Calu3 (cell line): ENCODE measurements at regions of chr17 and their contacts with region 1.

Region 1: DNA sequence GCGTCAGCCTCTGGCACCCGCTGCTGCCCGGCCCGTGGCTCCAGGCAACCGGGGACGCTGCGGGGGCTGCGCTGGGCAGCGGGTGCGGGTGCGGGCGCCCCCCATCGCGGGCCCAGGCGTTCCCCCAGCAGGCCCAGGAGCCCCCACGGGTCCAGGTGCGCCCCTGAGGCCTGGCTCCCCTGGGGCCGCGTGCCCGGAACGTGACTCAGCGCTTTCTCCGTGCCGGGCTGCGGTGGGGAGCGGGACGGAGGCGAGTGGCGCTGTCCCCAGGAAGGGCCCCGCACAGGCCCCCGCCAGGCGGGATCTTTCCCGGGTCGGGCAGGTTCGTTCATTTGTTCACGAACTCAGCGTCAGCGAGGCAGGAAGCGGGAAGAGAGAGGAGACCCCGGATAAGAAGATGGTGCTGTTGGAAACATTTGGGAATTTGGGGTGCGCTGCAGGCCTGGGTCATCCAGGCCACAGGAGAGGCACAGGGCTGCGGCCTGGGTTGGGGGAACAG is 18.4 kb upstream of the EXOC7 start:
- DNase-seq: no peak
- H3K4me3 Mint-ChIP-seq: no peak overlapping the region
- H3K27ac Mint-ChIP-seq: no peak overlapping the region
- H3K4me1 Mint-ChIP-seq: no peaks in the 10 kb centered on the region
- H3K27me3 Mint-ChIP-seq: no peaks in the 10 kb centered on the region
- CTCF ChIP-seq: no peak

Region 2: DNA sequence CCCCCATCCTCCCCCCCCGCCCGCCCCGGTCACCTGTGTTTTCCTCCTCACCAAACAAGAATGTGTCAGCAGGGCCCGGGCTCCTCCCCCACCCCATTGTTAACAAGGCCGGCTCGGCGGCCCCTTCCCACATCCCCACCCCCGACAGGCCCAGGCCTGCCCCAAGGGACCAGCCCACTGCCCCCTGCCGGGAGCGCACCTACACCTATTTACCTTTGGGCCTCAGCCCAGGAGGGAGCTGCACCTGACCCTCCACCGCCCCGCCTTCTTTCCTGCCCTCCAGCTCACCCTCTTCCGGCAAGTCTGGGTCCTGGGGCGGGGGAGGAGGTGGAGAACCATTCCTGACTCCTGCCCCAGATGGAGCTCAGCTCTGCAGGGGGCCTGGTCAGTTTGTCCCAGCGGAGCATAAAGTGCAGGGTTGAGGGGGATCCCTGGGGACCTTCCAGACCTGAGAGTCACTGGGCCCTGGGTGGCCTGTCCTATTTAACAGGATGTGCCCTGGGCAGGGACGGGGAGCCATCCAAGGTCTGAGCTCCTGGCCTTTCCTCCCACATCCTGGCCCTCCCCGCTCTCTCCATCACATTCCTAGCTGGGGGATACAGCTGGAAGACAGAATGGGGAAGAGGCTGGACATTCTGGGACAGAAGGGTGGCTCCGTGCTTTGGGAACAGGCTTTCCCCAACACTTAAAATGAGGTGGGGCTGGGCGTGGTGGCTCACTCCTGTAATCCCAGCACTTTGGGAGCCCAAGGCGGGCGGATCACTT is 10.8 kb after region 1 on chr17:
- CTCF ChIA-PET with region 1: interaction called, 21 read pairs
- intact Hi-C with region 1: no loop called
- DNase-seq: peak; percentile 82
- H3K4me3 Mint-ChIP-seq: peak overlapping the region; percentile 55
- H3K27ac Mint-ChIP-seq: no peak overlapping the region
- H3K4me1 Mint-ChIP-seq: peaks cover 18% of the 10 kb centered on the region
- H3K27me3 Mint-ChIP-seq: no peaks in the 10 kb centered on the region
- CTCF ChIP-seq: no peak

Region 3: GRCh38 chr17:76182016-76182764 is 60.2 kb after region 1 on chr17:
- CTCF ChIA-PET with region 1: interaction called, 9 read pairs
- intact Hi-C with region 1: loop called (anchors 2 kb)
- DNase-seq: peak; percentile 90
- H3K4me3 Mint-ChIP-seq: no peak overlapping the region
- H3K27ac Mint-ChIP-seq: no peak overlapping the region
- H3K4me1 Mint-ChIP-seq: no peaks in the 10 kb centered on the region
- H3K27me3 Mint-ChIP-seq: no peaks in the 10 kb centered on the region
- CTCF ChIP-seq: peak; percentile 83

Region 4: DNA sequence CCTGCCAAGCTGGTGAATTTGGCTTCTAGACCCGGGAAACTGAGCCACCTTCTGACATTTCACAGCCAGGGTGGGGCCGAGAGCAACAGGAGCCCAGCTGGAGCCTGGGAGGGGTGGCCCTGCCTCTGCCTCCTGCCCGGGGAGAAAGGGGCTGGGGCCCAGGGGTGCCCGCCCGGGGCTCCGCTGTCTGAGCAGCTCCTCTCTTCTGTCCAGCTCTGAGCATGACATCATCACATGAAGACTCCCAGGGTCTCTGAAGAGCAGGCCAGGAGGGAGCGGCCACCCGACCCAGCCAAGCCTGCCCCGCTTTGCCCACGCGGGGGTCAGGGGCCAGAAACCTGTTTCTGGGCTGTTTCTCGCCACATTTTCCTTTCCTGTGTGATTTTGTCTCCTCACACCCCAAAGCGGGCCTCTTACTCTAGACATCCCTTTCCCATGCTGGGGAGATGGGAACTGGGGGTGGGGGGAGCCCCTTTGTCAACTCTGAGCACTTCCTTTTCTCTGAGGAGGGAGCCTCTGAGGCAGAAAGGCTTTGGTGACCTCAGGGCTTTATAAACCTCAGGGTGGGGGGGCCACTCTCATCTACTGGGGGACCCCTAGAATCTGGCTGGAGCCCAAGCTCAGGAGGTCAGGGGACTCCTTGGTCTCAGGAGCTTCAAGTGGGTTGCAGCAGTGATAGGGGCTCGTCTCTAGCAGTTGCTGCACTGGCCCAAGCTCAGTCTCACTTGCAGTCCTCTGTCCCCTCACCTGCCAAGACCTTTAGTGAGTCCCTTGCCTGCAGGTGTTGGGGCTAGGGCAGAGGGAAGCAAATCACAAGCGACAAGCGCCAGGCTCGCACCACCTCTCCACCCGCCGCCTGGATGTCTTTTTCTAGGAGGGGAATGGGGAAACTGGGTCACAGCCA is 150.8 kb after region 1 on chr17:
- CTCF ChIA-PET with region 1: interaction called, 10 read pairs
- intact Hi-C with region 1: no loop called
- DNase-seq: no peak
- H3K4me3 Mint-ChIP-seq: no peak overlapping the region
- H3K27ac Mint-ChIP-seq: no peak overlapping the region
- H3K4me1 Mint-ChIP-seq: peaks cover 11% of the 10 kb centered on the region
- H3K27me3 Mint-ChIP-seq: no peaks in the 10 kb centered on the region
- CTCF ChIP-seq: no peak